CD8-positive, alpha-beta T cell (primary cell): ENCODE measurements at regions of chr5 and their contacts with region 1.

Region 1: DNA sequence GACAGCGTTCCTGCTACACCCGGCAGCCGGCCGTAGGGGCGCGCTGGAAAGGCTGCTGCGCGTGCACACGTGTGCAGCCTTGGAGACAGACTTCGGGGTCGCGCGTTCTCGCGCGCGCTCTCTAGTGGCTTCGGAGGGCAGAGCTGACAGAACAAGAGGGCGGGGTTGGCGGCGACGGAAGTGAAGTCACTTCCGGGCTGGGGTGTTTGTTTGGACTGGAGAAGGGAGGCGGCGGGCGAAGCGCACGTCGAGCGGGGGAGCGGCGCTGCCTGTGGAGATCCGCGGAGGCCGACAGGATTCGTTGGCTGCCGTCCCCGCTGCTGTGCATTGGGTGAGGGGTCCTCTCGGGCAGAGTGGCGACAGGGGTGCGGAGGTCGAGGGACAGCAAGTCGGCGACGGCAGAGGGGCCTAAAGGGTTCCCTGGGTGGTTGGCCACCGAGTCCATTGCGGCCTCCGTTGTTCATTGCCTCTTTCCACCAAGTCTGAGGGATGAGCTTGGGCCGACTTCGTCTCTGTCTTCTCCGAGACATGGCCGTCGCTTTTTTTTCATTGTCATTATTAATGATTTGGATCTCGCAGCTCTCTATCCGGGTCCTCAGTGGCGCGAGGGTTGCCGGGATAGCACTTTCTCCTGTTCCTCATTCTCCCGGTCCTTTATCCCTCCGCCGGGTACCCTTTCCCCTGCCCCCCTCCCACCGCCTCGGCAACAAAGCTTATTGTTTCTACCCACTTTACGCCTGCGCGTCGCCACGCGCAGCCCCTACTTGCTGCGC is at the start of gene PAIP2:
- DNase-seq: peak; percentile 96 to 99 (median 98)
- ATAC-seq: peak; percentile 79
- H3K4me3 ChIP-seq: peak within 1 kb of the TSS; percentile 92 to 100
- H3K4me3 Mint-ChIP-seq: peak within 1 kb of the TSS; percentile 99
- H3K27ac ChIP-seq: peak within 1 kb of the TSS; percentile 100
- H3K27ac Mint-ChIP-seq: peak within 1 kb of the TSS; percentile 100
- H3K4me1 ChIP-seq: peaks cover 36% of the 10 kb centered on the region
- H3K4me1 Mint-ChIP-seq: peaks cover 48% of the 10 kb centered on the region
- H3K27me3 ChIP-seq: no peaks in the 10 kb centered on the region
- H3K27me3 Mint-ChIP-seq: no peaks in the 10 kb centered on the region
- CTCF ChIP-seq: peak; percentile 68
- total RNA-seq, gene PAIP2: 173 to 179 TPM

Region 2: GRCh38 chr5:139197710-139198669 is 143.8 kb before region 1 on chr5 and contains the start of gene SIL1:
- CTCF ChIA-PET with region 1: no interaction called
- POLR2A ChIA-PET with region 1: no interaction called
- intact Hi-C with region 1: loop called in 1 of 2 experiments (anchors 1 kb)
- DNase-seq: peak; percentile 94 to 98 (median 96)
- ATAC-seq: peak; percentile 98
- H3K4me3 ChIP-seq: peak within 1 kb of the TSS; percentile 60 to 70
- H3K4me3 Mint-ChIP-seq: peak within 1 kb of the TSS; percentile 84
- H3K27ac ChIP-seq: peak within 1 kb of the TSS; percentile 82 to 84
- H3K27ac Mint-ChIP-seq: peak within 1 kb of the TSS; percentile 91
- H3K4me1 ChIP-seq: peaks cover 8% of the 10 kb centered on the region
- H3K4me1 Mint-ChIP-seq: peaks cover 24% of the 10 kb centered on the region
- H3K27me3 ChIP-seq: no peaks in the 10 kb centered on the region
- H3K27me3 Mint-ChIP-seq: no peaks in the 10 kb centered on the region
- CTCF ChIP-seq: no peak
- total RNA-seq, gene SIL1: 14.0 to 19.5 TPM

Region 3: DNA sequence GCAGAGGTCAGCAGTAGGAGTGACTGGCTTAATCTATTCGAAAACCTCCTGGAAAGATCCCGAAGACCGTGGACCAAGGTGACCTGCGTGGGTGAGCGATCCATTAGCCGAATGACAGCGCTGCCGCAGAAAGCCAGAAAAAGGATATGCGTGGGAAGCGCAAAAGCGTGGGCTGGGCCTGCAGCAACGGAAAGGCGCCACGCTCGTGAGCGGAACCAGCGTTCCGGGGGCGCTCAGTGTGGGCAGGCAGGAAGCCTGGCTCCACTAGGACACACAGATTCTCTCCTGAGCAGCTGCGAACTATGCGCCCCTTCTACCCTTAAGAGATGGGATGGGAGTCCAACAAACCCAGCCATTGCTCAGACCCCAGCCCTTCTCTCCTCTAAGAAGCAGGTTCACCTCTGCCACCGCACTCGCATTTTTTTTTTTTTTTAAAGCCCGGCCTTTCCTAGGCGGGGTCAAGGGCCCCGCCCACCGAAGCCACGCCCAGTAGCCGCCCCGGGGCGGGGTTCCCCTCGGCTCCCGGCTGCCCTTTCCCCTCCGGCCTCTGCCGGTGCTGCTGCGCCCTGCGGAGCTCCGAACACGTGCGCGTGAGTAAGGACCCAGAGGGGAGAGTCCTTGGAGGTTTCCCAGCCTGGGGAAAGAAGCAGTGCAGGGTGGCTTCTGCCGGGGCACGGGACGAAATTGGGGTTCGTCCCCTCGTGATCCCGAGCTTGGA is 68.1 kb before region 1 on chr5:
- CTCF ChIA-PET with region 1: interaction called, 3 read pairs
- POLR2A ChIA-PET with region 1: interaction called, 13 read pairs
- intact Hi-C with region 1: loop called in 1 of 2 experiments (anchors 1 kb)
- DNase-seq: peak; percentile 73 to 91 (median 83)
- ATAC-seq: peak; percentile 90
- H3K4me3 ChIP-seq: peak overlapping the region; percentile 81 to 86
- H3K4me3 Mint-ChIP-seq: peak overlapping the region; percentile 88
- H3K27ac ChIP-seq: peak overlapping the region; percentile 56 to 57
- H3K27ac Mint-ChIP-seq: peak overlapping the region; percentile 72
- H3K4me1 ChIP-seq: peaks cover 36% of the 10 kb centered on the region
- H3K4me1 Mint-ChIP-seq: peaks cover 50% of the 10 kb centered on the region
- H3K27me3 ChIP-seq: no peaks in the 10 kb centered on the region
- H3K27me3 Mint-ChIP-seq: no peaks in the 10 kb centered on the region
- CTCF ChIP-seq: no peak

Region 4: GRCh38 chr5:139301808-139302499 is 39.9 kb before region 1 on chr5:
- CTCF ChIA-PET with region 1: interaction called, 4 read pairs
- POLR2A ChIA-PET with region 1: interaction called, 15 read pairs
- intact Hi-C with region 1: no loop called
- DNase-seq: no peak
- ATAC-seq: no peak
- H3K4me3 ChIP-seq: no peak overlapping the region
- H3K4me3 Mint-ChIP-seq: peak overlapping the region; percentile 35
- H3K27ac ChIP-seq: peak overlapping the region in 1 of 2 experiments; percentile 6
- H3K27ac Mint-ChIP-seq: peak overlapping the region; percentile 12
- H3K4me1 ChIP-seq: peaks cover 98% of the 10 kb centered on the region
- H3K4me1 Mint-ChIP-seq: peaks cover 90% of the 10 kb centered on the region
- H3K27me3 ChIP-seq: no peaks in the 10 kb centered on the region
- H3K27me3 Mint-ChIP-seq: no peaks in the 10 kb centered on the region
- CTCF ChIP-seq: no peak

Region 5: DNA sequence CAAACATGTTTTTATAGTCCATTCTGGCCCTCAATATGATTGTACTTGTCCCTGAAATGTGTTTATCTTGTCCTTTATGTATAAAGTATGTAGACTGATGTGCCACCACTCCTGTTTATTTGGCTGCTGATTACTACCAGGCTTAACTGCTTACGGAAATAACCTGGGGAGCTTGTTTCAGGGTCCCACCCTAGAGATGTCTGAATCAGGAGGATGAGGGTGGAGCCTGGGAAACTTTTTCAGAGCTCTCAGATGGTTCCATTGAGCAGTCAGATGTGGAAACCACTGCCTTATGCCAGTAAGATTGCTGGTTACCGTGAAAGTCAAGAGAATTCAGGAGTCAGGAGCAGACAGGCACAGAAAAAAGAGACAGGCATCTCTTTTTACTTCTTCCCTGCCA is 22.1 kb after region 1 on chr5:
- CTCF ChIA-PET with region 1: interaction called, 3 read pairs
- POLR2A ChIA-PET with region 1: interaction called, 11 read pairs
- intact Hi-C with region 1: loop called in 1 of 2 experiments (anchors 2 kb)
- DNase-seq: peak in 1 of 9 experiments; percentile 9
- ATAC-seq: no peak
- H3K4me3 ChIP-seq: no peak overlapping the region
- H3K4me3 Mint-ChIP-seq: no peak overlapping the region
- H3K27ac ChIP-seq: no peak overlapping the region
- H3K27ac Mint-ChIP-seq: no peak overlapping the region
- H3K4me1 ChIP-seq: no peaks in the 10 kb centered on the region
- H3K4me1 Mint-ChIP-seq: peaks cover 10% of the 10 kb centered on the region
- H3K27me3 ChIP-seq: no peaks in the 10 kb centered on the region
- H3K27me3 Mint-ChIP-seq: no peaks in the 10 kb centered on the region
- CTCF ChIP-seq: no peak

Region 6: GRCh38 chr5:139392678-139393496 is 51.1 kb after region 1 on chr5:
- CTCF ChIA-PET with region 1: no interaction called
- POLR2A ChIA-PET with region 1: interaction called, 8 read pairs
- intact Hi-C with region 1: loop called (anchors 1 to 2 kb)
- DNase-seq: peak; percentile 48 to 88 (median 75)
- ATAC-seq: peak; percentile 62
- H3K4me3 ChIP-seq: peak overlapping the region; percentile 72 to 84
- H3K4me3 Mint-ChIP-seq: peak overlapping the region; percentile 90
- H3K27ac ChIP-seq: peak overlapping the region in 1 of 2 experiments; percentile 29
- H3K27ac Mint-ChIP-seq: peak overlapping the region; percentile 60
- H3K4me1 ChIP-seq: peaks cover 44% of the 10 kb centered on the region
- H3K4me1 Mint-ChIP-seq: peaks cover 42% of the 10 kb centered on the region
- H3K27me3 ChIP-seq: no peaks in the 10 kb centered on the region
- H3K27me3 Mint-ChIP-seq: no peaks in the 10 kb centered on the region
- CTCF ChIP-seq: peak; percentile 62

Region 7: GRCh38 chr5:139844472-139845145 is 502.8 kb after region 1 on chr5:
- CTCF ChIA-PET with region 1: no interaction called
- POLR2A ChIA-PET with region 1: no interaction called
- intact Hi-C with region 1: loop called in 1 of 2 experiments (anchors 5 kb)
- DNase-seq: peak; percentile 50 to 83 (median 77)
- ATAC-seq: peak; percentile 24
- H3K4me3 ChIP-seq: no peak overlapping the region
- H3K4me3 Mint-ChIP-seq: no peak overlapping the region
- H3K27ac ChIP-seq: no peak overlapping the region
- H3K27ac Mint-ChIP-seq: no peak overlapping the region
- H3K4me1 ChIP-seq: no peaks in the 10 kb centered on the region
- H3K4me1 Mint-ChIP-seq: peaks cover 15% of the 10 kb centered on the region
- H3K27me3 ChIP-seq: no peaks in the 10 kb centered on the region
- H3K27me3 Mint-ChIP-seq: peaks cover 18% of the 10 kb centered on the region
- CTCF ChIP-seq: peak; percentile 76